ENCODE measurements at regions of chr1 and their contacts with region 1.

Region 1: DNA sequence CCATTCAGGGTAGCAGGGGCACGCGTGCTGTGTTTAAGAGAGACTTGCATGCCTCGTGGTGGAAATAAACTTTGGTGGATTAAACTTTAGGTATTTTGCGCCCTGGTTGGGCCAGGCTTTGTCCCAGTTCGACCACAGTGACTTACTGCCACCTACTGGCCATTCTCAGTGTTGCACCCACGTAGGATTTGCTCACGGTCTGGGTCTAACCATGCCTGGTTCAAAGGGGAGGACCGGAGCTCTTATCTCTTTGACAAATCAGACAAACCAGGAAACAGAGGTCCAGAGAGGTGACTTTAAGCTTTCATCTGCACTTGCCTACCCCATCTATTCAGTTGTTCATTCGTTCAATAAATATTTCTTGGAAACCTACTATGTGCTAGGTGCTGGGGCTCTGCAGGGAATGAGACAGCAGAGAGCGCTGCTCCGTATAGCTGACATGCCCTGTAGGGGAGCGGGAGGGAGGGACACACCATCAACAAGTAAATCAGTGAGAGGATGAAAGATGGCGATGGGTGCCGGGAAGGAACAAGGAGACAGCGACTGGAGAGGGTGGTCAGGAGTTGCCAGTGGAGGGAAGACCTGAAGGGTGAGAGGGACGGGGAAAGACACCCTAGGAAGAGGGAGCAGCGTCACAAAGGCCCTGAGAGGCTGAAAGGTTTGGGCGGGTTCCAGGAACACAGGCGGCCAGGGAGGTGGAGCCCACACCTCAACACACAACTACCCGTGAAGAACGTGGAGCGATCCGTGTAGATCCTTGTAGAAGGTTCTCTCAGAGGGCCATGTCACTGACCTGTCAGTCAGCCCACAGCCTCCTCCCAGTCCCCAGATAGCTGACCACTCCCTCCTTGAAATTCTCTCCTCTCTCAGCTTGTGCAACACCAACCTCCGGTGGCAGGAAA is 27.2 kb upstream of the TINAGL1 start:
- DNase-seq: peak; percentile 91
- H3K4me3 Mint-ChIP-seq: peak overlapping the region; percentile 42
- H3K27ac Mint-ChIP-seq: no peak overlapping the region
- H3K4me1 Mint-ChIP-seq: peaks cover 13% of the 10 kb centered on the region
- H3K27me3 Mint-ChIP-seq: peaks cover 10% of the 10 kb centered on the region

Region 2: DNA sequence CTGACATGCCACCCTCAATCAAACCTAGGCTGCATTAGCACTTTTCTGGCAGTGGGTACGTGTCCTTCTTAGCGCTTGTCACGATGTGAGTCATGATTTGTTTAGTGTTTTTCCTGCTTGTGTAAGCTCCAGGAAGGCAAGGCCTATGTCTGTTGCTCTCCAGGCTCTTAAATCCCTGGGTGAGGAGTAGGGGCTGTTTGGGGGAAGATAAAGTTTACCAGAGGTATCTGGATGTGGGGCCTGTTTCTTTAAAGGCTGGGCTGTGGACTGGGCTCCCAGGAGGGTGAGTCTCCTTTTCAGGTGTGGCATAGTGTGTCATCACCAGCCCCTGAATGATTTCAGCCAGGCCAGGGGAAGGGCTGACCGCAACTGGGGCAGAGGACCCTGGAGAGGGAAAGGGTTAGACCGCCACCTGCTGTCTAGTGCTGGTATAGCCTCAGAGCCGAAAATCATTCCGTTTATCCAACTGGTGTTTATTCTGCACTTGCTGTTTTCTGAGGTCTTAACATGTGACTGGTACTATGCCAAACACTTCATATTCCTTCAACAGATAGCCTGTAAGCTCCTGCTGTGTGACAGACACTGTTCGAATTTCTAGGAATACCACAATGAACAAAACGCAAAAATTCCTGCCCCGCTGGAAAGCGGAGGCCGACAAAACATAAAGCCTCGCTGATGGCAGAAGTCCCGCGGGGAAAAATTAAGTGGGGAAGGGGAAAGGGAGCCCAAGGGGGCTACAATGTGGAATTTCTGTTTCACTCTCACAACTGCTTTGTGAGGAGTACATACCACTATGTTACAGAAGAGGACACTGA is 126.4 kb before region 1 on chr1:
- CTCF ChIA-PET with region 1: interaction called, 15 read pairs
- POLR2A ChIA-PET with region 1: no interaction called
- DNase-seq: peak; percentile 71
- H3K4me3 Mint-ChIP-seq: no peak overlapping the region
- H3K27ac Mint-ChIP-seq: no peak overlapping the region
- H3K4me1 Mint-ChIP-seq: peaks cover 9% of the 10 kb centered on the region
- H3K27me3 Mint-ChIP-seq: peaks cover 22% of the 10 kb centered on the region

Region 3: DNA sequence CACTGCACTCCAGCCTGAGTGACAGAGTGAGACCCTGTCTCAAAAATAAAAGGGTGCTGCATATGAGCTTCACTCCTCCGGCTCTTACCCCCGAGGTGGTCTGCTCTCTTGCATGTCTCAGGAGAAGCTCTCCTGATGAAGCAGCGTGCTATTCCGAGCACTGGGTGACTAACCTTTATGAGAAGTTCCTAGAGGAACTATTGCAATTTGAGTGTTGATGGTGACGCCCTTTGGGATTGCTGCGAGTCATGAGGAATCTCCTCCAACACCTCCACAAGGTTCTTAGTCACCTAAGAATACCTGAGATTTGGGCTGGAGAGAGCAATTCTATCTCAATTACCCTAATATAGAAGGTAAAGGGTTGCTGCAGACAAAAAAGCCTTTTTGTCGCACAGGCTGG is 13.6 kb before region 1 on chr1:
- CTCF ChIA-PET with region 1: interaction called, 25 read pairs
- POLR2A ChIA-PET with region 1: no interaction called
- DNase-seq: no peak
- H3K4me3 Mint-ChIP-seq: no peak overlapping the region
- H3K27ac Mint-ChIP-seq: no peak overlapping the region
- H3K4me1 Mint-ChIP-seq: peaks cover 7% of the 10 kb centered on the region
- H3K27me3 Mint-ChIP-seq: peaks cover 42% of the 10 kb centered on the region

Region 4: DNA sequence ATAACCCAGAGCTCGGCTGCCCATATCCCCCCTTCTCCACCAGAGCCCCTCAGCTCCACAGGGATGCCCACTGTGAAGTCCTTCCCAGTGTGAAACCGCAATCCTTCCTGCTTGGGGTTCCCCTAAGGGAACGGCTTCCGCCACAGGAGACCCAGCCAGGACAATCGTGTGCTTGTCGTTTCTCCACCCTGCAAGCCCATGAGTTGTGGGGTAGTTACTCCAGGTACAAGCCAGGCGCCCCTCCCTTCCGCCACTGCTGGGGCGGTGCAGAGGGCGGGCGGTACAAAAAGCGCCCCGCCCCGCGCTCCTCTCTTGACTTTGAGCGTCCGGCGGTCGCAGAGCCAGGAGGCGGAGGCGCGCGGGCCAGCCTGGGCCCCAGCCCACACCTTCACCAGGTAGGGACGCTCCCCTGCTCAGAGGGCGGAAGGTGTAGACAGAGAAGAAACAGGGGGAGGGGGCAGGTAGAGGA is 27.1 kb after region 1 on chr1 and contains the start of gene TINAGL1:
- CTCF ChIA-PET with region 1: no interaction called
- POLR2A ChIA-PET with region 1: no interaction called
- DNase-seq: peak; percentile 16
- H3K4me3 Mint-ChIP-seq: no peak within 1 kb of the TSS
- H3K27ac Mint-ChIP-seq: no peak within 1 kb of the TSS
- H3K4me1 Mint-ChIP-seq: peaks cover 2% of the 10 kb centered on the region
- H3K27me3 Mint-ChIP-seq: peaks cover 11% of the 10 kb centered on the region
- total RNA-seq, gene TINAGL1: not detected